Calu3 (cell line): ENCODE measurements at regions of chr13 and their contacts with region 1.

Region 1: DNA sequence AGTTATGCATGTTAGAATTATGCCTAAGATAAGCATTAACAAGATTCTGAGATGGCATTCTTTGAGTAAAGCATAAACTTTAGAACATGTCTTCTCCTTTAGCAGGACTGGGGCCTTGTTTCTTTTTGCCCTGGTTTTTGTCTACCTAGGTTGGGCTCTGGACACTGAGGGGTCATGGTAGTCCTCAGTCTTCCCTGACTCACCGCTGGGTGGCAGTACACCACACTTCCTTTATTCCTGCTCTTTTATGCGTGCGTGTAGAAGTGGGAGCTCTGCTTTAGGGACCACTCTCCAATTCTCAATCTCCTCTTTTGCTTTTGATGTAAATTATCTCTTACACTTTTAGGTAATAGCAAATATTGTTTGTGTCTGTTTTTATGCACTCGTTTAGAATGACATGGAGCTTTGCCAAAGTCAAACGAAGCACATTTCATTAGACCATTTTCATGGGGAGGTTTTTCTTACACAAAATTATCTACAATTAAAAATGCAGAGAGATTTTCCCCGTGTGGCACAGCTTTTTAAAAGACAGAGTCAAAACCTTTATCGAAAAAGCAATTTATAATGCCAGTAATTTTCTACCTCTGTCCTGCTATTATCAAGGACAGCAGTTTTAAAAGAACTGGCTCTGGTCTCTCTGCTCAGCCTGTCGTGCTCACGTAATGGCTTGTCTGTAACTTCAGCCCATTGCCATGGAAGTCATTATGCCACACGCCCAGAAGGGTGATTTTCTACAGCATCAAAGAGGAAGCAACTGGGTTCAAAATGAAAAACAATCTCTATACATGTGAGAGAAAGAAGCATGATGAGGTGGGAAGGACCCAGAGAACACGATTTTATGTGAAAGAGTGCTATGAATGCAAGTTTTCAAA is 413.9 kb downstream of the COG6 start:
- DNase-seq: peak; percentile 67
- H3K4me3 Mint-ChIP-seq: no peak overlapping the region
- H3K27ac Mint-ChIP-seq: no peak overlapping the region
- H3K4me1 Mint-ChIP-seq: peaks cover 4% of the 10 kb centered on the region
- H3K27me3 Mint-ChIP-seq: no peaks in the 10 kb centered on the region
- CTCF ChIP-seq: no peak

Region 2: GRCh38 chr13:39729156-39729555 is 340.3 kb before region 1 on chr13:
- CTCF ChIA-PET with region 1: no interaction called
- intact Hi-C with region 1: no loop called
- DNase-seq: no peak
- H3K4me3 Mint-ChIP-seq: no peak overlapping the region
- H3K27ac Mint-ChIP-seq: no peak overlapping the region
- H3K4me1 Mint-ChIP-seq: no peaks in the 10 kb centered on the region
- H3K27me3 Mint-ChIP-seq: no peaks in the 10 kb centered on the region
- CTCF ChIP-seq: no peak

Region 3: GRCh38 chr13:39748961-39749360 is 320.4 kb before region 1 on chr13:
- CTCF ChIA-PET with region 1: no interaction called
- intact Hi-C with region 1: no loop called
- DNase-seq: no peak
- H3K4me3 Mint-ChIP-seq: no peak overlapping the region
- H3K27ac Mint-ChIP-seq: no peak overlapping the region
- H3K4me1 Mint-ChIP-seq: no peaks in the 10 kb centered on the region
- H3K27me3 Mint-ChIP-seq: no peaks in the 10 kb centered on the region
- CTCF ChIP-seq: no peak

Region 4: GRCh38 chr13:40329657-40330485 is 260.5 kb after region 1 on chr13:
- CTCF ChIA-PET with region 1: no interaction called
- intact Hi-C with region 1: loop called (anchors 5 kb)
- DNase-seq: no peak
- H3K4me3 Mint-ChIP-seq: no peak overlapping the region
- H3K27ac Mint-ChIP-seq: peak overlapping the region; percentile 98
- H3K4me1 Mint-ChIP-seq: peaks cover 29% of the 10 kb centered on the region
- H3K27me3 Mint-ChIP-seq: no peaks in the 10 kb centered on the region
- CTCF ChIP-seq: no peak